Naive thymus-derived CD4-positive, alpha-beta T cell (primary cell): ENCODE measurements at regions of chr15 and their contacts with region 1.

Region 1: GRCh38 chr15:74768771-74769342 is 13.0 kb upstream of the CSK start:
- DNase-seq: peak in 7 of 9 donors; percentile 48 to 67 (median 62)
- ATAC-seq: peak; percentile 72
- H3K4me3 ChIP-seq: no peak overlapping the region
- H3K4me3 Mint-ChIP-seq: peak overlapping the region in 3 of 10 donors; percentile 8 to 41 (median 33)
- H3K27ac ChIP-seq: no peak overlapping the region
- H3K27ac Mint-ChIP-seq: peak overlapping the region in 2 of 9 donors; percentile 4 to 60
- H3K4me1 ChIP-seq: peaks cover 7 to 22% of the 10 kb centered on the region in 2 donors
- H3K4me1 Mint-ChIP-seq: peaks cover 14 to 35% (median 26%) of the 10 kb centered on the region in 7 donors
- H3K27me3 ChIP-seq: no peaks in the 10 kb centered on the region
- H3K27me3 Mint-ChIP-seq: peaks cover 0 to 7% (median 5%) of the 10 kb centered on the region in 5 donors

Region 2: GRCh38 chr15:74036271-74037170 is 732.3 kb before region 1 on chr15:
- CTCF ChIA-PET with region 1: no interaction called
- POLR2A ChIA-PET with region 1: no interaction called
- intact Hi-C with region 1: no loop called
- DNase-seq: no peak
- ATAC-seq: no peak
- H3K4me3 ChIP-seq: no peak overlapping the region
- H3K4me3 Mint-ChIP-seq: no peak overlapping the region
- H3K27ac ChIP-seq: no peak overlapping the region
- H3K27ac Mint-ChIP-seq: peak overlapping the region in 4 of 9 donors; percentile 14 to 82 (median 56)
- H3K4me1 ChIP-seq: no peaks in the 10 kb centered on the region
- H3K4me1 Mint-ChIP-seq: peaks cover 0 to 4% (median 0%) of the 10 kb centered on the region in 7 donors
- H3K27me3 ChIP-seq: no peaks in the 10 kb centered on the region
- H3K27me3 Mint-ChIP-seq: no peaks in the 10 kb centered on the region

Region 3: GRCh38 chr15:74373731-74374647 is 394.9 kb before region 1 on chr15:
- CTCF ChIA-PET with region 1: interaction called, 3 read pairs
- POLR2A ChIA-PET with region 1: no interaction called
- intact Hi-C with region 1: loop called (anchors 1 kb)
- DNase-seq: peak; percentile 82 to 94 (median 91)
- ATAC-seq: peak; percentile 97
- H3K4me3 ChIP-seq: peak overlapping the region; percentile 98
- H3K4me3 Mint-ChIP-seq: peak overlapping the region; percentile 68 to 89 (median 84)
- H3K27ac ChIP-seq: peak overlapping the region; percentile 62
- H3K27ac Mint-ChIP-seq: peak overlapping the region; percentile 18 to 82 (median 40)
- H3K4me1 ChIP-seq: peaks cover 9% of the 10 kb centered on the region in 2 donors
- H3K4me1 Mint-ChIP-seq: peaks cover 0 to 32% (median 15%) of the 10 kb centered on the region in 7 donors
- H3K27me3 ChIP-seq: no peaks in the 10 kb centered on the region
- H3K27me3 Mint-ChIP-seq: peaks cover 0 to 31% (median 5%) of the 10 kb centered on the region in 5 donors

Region 4: DNA sequence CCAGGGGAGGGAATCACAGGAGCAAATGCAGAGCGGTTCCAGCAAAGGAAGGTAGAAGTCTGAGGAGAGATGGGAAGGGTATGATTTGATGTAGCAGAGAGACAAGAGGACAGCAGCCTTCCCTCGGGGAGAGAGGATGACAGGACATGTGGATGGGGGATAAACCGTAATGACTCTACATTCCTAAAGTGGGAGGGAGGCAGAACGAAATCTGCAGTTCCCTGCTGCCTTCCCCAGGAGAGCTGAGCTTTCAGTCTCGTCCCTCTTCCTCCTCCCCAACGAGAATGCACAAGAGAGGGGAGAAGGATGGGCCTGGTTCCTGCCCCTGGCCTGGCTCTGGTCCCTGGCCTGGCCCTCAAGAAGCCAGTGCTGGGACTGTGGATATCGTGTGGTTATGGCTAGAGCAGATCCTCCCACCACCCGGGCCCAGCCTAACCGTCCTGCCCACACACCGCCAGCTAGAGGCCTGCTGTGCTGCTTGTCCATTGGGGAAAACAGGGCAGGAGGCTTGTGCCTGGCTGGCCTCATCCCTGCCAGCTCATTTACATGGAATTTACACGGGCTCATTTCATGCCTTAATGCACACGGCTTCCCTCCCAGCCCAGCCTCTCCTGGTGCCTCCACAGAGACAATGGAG is 361.7 kb before region 1 on chr15:
- CTCF ChIA-PET with region 1: no interaction called
- POLR2A ChIA-PET with region 1: no interaction called
- intact Hi-C with region 1: no loop called
- DNase-seq: no peak
- ATAC-seq: no peak
- H3K4me3 ChIP-seq: no peak overlapping the region
- H3K4me3 Mint-ChIP-seq: no peak overlapping the region
- H3K27ac ChIP-seq: no peak overlapping the region
- H3K27ac Mint-ChIP-seq: no peak overlapping the region
- H3K4me1 ChIP-seq: peaks cover 18% of the 10 kb centered on the region in 2 donors
- H3K4me1 Mint-ChIP-seq: peaks cover 16 to 29% (median 23%) of the 10 kb centered on the region in 7 donors
- H3K27me3 ChIP-seq: no peaks in the 10 kb centered on the region
- H3K27me3 Mint-ChIP-seq: no peaks in the 10 kb centered on the region

Region 5: DNA sequence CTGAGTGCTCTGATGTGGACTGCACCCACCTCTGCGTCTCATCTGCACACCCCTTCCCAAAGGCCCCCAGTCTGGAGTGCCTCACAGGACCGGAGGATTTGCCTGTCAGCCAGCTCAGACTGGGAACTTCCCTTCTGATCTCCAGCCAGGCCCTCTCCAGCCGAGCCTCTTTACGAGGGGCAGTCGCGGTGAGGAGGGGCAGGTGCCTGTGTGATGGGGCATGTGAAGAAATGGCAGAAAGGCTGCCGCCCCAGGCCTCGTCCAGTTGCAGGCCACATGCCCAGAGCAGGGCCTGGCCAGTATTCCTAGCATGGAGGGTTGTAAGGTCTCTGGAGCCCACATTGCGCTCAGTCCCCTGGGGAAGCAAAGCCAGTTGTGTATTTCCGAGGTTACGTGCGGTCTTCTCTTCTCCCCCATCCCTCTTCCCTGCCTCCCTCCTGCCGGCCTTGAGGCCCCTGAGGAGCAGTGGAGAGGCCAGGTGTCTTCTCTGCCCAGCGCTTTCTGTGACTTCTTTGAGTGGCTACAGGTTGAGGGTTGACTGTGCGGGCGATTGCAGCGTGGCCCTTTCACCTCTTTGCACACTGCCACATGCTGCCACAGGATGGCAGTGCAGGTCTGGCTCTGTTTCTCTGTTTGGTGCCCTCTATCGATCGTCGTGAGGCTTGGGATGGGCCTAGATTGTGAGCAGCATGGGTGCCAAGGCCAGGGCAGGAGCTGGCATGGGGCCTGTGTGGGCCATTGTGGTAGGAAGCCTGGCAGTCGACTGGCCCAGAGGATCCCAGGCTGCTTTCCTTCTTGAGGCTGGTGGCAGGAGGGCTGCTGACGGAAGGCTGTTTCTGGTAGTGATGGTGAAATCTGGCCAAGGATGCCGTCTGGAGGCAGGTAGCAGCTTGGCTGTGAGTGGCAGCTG is 148.0 kb before region 1 on chr15:
- CTCF ChIA-PET with region 1: interaction called, 16 read pairs
- POLR2A ChIA-PET with region 1: interaction called, 3 read pairs
- intact Hi-C with region 1: no loop called
- DNase-seq: peak; percentile 46 to 78 (median 74)
- ATAC-seq: peak; percentile 95
- H3K4me3 ChIP-seq: no peak overlapping the region
- H3K4me3 Mint-ChIP-seq: peak overlapping the region in 8 of 10 donors; percentile 3 to 82 (median 42)
- H3K27ac ChIP-seq: peak overlapping the region; percentile 6
- H3K27ac Mint-ChIP-seq: peak overlapping the region; percentile 9 to 91 (median 76)
- H3K4me1 ChIP-seq: peaks cover 22 to 32% of the 10 kb centered on the region in 2 donors
- H3K4me1 Mint-ChIP-seq: peaks cover 46 to 64% (median 56%) of the 10 kb centered on the region in 7 donors
- H3K27me3 ChIP-seq: no peaks in the 10 kb centered on the region
- H3K27me3 Mint-ChIP-seq: no peaks in the 10 kb centered on the region

Region 6: GRCh38 chr15:74781431-74782258 is 12.8 kb after region 1 on chr15 and contains the start of gene CSK:
- CTCF ChIA-PET with region 1: interaction called, 1,110 read pairs
- POLR2A ChIA-PET with region 1: interaction called, 1,077 read pairs
- intact Hi-C with region 1: loop called in 1 of 2 experiments (anchors 1 kb)
- DNase-seq: peak; percentile 68 to 90 (median 85)
- ATAC-seq: peak; percentile 80
- H3K4me3 ChIP-seq: peak within 1 kb of the TSS; percentile 91
- H3K4me3 Mint-ChIP-seq: peak within 1 kb of the TSS; percentile 87 to 99 (median 96)
- H3K27ac ChIP-seq: peak within 1 kb of the TSS; percentile 92
- H3K27ac Mint-ChIP-seq: peak within 1 kb of the TSS; percentile 90 to 100 (median 98)
- H3K4me1 ChIP-seq: peaks cover 62% of the 10 kb centered on the region in 2 donors
- H3K4me1 Mint-ChIP-seq: peaks cover 64 to 73% (median 70%) of the 10 kb centered on the region in 7 donors
- H3K27me3 ChIP-seq: no peaks in the 10 kb centered on the region
- H3K27me3 Mint-ChIP-seq: no peaks in the 10 kb centered on the region
- total RNA-seq, gene CSK: 163 to 421 (median 228) TPM

Region 7: DNA sequence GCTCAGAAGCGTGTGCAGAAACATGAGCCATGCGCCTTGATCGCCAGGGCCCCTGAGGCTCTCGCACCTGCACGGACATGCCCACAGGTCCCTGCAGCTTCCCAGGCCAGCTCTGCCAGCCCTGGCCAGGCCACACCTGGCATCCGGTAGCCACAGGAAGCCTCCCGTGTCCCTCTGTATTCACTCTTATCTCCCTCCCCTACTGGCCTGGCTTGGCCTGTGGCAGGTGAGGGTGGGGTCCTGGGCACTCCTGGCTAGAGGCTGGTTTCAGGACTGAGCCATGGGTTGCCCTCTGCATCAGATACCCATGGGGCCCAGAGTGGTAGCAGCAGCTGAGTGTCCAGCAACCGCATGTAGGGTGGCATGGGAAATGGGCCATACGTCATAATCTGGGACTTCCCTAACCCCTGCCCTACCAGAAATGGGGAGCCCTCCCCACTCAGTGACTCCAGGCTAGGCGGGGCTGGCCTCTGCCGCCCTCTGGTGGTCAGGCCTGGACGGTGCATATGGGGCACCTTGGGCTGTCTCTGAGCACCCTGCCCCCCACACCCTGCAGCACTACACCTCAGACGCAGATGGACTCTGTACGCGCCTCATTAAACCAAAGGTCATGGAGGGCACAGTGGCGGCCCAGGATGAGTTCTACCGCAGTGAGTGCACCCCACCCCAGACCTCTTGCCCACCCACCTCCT is 31.1 kb after region 1 on chr15:
- CTCF ChIA-PET with region 1: interaction called, 1,110 read pairs
- POLR2A ChIA-PET with region 1: interaction called, 1,077 read pairs
- intact Hi-C with region 1: loop called (anchors 1 kb)
- DNase-seq: peak; percentile 76 to 92 (median 85)
- ATAC-seq: peak; percentile 98
- H3K4me3 ChIP-seq: no peak overlapping the region
- H3K4me3 Mint-ChIP-seq: peak overlapping the region in 6 of 10 donors; percentile 13 to 61 (median 41)
- H3K27ac ChIP-seq: peak overlapping the region; percentile 92
- H3K27ac Mint-ChIP-seq: peak overlapping the region; percentile 66 to 93 (median 84)
- H3K4me1 ChIP-seq: peaks cover 51 to 54% of the 10 kb centered on the region in 2 donors
- H3K4me1 Mint-ChIP-seq: peaks cover 31 to 60% (median 48%) of the 10 kb centered on the region in 7 donors
- H3K27me3 ChIP-seq: no peaks in the 10 kb centered on the region
- H3K27me3 Mint-ChIP-seq: no peaks in the 10 kb centered on the region

Region 8: DNA sequence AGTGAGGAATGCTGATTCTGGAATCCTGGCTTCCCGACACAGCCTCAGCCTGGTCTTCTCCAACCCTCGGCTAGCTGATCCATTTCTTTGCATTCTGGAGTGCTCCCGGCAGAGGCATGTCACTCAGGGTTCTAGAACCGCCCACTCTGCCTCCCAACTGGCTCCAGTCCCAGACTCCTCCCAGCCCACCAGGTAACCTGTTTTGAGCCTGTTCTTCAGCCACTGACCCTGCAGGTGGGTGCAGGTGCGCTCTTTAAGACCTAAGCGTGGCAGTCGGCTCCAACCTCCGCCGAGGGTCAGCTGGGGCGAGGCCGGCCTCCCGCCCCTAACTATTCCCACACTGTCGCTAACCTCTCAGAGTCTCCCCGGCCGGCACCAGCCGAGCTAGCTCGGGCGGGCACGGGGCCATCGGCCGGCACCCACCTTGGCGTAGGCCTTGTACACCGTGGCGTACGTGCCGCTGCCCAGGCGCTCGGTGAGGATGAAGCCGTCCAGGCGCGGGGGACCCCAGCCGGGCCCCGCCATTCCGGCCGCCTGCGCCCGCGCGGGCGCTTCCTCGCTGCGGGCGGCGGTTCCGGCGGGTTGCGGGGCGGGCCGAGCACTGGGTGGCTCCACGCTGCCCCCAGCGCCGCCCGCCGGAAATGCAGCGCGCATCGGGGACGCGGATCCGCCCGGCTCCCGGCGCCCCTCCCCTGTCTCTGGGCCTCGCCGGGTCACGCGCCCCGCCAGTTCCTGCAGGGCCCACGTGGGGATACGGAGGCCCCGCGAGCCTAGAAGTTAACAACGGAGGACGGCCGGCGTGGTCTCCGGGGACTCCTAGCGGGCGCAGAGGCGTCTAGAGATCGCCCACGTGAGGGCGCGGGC is 74.0 kb after region 1 on chr15 and contains the start of gene ULK3:
- CTCF ChIA-PET with region 1: interaction called, 5 read pairs
- POLR2A ChIA-PET with region 1: interaction called, 6 read pairs
- intact Hi-C with region 1: loop called in 1 of 2 experiments (anchors 2 kb)
- DNase-seq: peak; percentile 89 to 97 (median 93)
- ATAC-seq: peak; percentile 97
- H3K4me3 ChIP-seq: peak within 1 kb of the TSS; percentile 74
- H3K4me3 Mint-ChIP-seq: peak within 1 kb of the TSS; percentile 80 to 95 (median 90)
- H3K27ac ChIP-seq: peak within 1 kb of the TSS; percentile 79
- H3K27ac Mint-ChIP-seq: peak within 1 kb of the TSS; percentile 88 to 95 (median 94)
- H3K4me1 ChIP-seq: peaks cover 40 to 50% of the 10 kb centered on the region in 2 donors
- H3K4me1 Mint-ChIP-seq: peaks cover 26 to 62% (median 50%) of the 10 kb centered on the region in 7 donors
- H3K27me3 ChIP-seq: no peaks in the 10 kb centered on the region
- H3K27me3 Mint-ChIP-seq: no peaks in the 10 kb centered on the region
- total RNA-seq, gene ULK3: 53.2 to 106 (median 59.2) TPM

Region 9: DNA sequence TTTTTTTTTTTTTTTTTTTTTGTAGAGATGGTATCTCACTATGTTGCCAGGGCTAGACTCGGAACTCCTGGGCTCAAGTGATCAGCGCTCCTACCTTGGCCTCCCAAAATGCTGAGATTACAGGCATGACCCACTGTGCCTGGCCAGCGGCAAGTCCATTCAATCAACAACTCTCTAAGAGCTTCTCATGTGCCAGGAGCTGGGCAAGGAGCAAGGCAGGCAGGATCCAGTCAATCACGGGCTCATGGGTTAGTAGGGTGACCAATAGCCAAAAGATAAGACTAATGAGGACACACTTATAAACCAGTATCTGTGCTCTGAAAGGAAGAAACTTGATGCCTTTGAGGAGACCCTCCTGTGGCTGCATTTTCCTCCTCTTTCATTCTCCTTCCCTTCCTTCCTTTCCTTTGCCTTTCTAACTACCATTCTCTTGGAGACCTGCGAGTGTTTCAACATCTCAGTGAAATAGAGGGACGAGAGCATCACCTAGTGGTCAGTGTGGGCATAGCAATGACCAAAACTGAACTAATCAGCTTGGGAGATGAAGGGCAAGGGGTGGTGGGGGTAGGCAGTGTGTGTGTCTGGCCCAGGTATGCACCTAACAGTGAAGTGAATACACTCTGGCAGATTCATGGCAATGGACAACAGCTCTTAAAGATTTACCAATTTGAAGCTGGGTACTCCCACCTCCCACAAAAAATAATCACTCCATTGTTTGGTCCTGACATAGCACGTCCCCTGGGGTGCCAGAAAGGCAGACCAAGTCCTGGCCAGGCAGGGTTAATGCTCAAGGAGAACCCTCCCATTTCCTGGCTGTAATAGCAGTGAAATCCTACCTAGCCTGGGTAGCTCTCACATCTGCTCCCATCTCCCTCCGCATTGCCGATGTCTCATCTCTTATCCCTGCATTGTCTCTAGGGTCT is 181.5 kb after region 1 on chr15:
- CTCF ChIA-PET with region 1: interaction called, 73 read pairs
- POLR2A ChIA-PET with region 1: interaction called, 3 read pairs
- intact Hi-C with region 1: loop called (anchors 1 kb)
- DNase-seq: peak; percentile 54 to 82 (median 75)
- ATAC-seq: peak; percentile 97
- H3K4me3 ChIP-seq: no peak overlapping the region
- H3K4me3 Mint-ChIP-seq: no peak overlapping the region
- H3K27ac ChIP-seq: no peak overlapping the region
- H3K27ac Mint-ChIP-seq: peak overlapping the region in 2 of 9 donors; percentile 28 to 54
- H3K4me1 ChIP-seq: no peaks in the 10 kb centered on the region
- H3K4me1 Mint-ChIP-seq: peaks cover 4 to 17% (median 10%) of the 10 kb centered on the region in 7 donors
- H3K27me3 ChIP-seq: no peaks in the 10 kb centered on the region
- H3K27me3 Mint-ChIP-seq: peaks cover 0 to 3% (median 0%) of the 10 kb centered on the region in 5 donors